ENCODE measurements at regions of chr1 and their contacts with region 1.

Region 1: DNA sequence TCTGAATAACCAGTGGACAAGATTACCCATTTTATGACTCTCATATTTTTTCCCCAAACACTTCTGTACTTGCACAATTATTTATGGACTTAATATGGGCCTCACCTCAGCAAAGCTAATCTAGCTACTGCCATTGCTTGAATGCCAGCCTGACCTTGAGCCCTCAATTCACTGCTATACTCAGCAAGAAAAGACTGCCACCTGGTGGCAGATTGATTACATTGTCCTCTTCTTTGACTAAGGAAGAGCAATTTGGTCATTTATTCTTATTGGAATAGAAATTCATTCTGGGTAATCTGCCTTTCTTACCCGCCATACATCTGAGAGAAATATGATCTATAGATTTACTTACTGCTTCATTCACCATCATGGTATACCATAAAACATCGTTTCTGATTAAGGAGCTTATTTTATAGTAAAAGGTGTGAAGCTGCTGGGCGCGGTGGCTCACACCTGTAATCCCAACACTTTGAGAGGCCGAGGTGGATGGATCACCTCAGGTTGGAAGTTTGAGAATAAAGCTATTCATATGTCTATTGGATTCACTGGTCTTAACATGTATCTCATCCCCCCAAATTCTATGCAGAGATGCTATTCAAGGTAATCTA is 32.9 kb upstream of the DIPK1A start:
- DNase-seq: peak; percentile 66
- H3K4me3 Mint-ChIP-seq: no peak overlapping the region
- H3K27ac Mint-ChIP-seq: no peak overlapping the region
- H3K4me1 Mint-ChIP-seq: peaks cover 42% of the 10 kb centered on the region
- H3K27me3 Mint-ChIP-seq: no peaks in the 10 kb centered on the region

Region 2: GRCh38 chr1:92784639-92785500 is 209.3 kb before region 1 on chr1 and contains the start of gene EVI5:
- CTCF ChIA-PET with region 1: no interaction called
- POLR2A ChIA-PET with region 1: no interaction called
- intact Hi-C with region 1: no loop called
- DNase-seq: peak; percentile 70
- H3K4me3 Mint-ChIP-seq: peak within 1 kb of the TSS; percentile 71
- H3K27ac Mint-ChIP-seq: no peak within 1 kb of the TSS
- H3K4me1 Mint-ChIP-seq: peaks cover 13% of the 10 kb centered on the region
- H3K27me3 Mint-ChIP-seq: peaks cover 44% of the 10 kb centered on the region
- total RNA-seq, gene EVI5: 36.0 to 37.2 TPM

Region 3: GRCh38 chr1:92837062-92837461 is 157.1 kb before region 1 on chr1:
- CTCF ChIA-PET with region 1: interaction called, 15 read pairs
- POLR2A ChIA-PET with region 1: interaction called, 3 read pairs
- intact Hi-C with region 1: no loop called
- DNase-seq: no peak
- H3K4me3 Mint-ChIP-seq: peak overlapping the region; percentile 38
- H3K27ac Mint-ChIP-seq: peak overlapping the region; percentile 95
- H3K4me1 Mint-ChIP-seq: peaks cover 79% of the 10 kb centered on the region
- H3K27me3 Mint-ChIP-seq: no peaks in the 10 kb centered on the region

Region 4: GRCh38 chr1:92951141-92951582 is 43.0 kb before region 1 on chr1:
- CTCF ChIA-PET with region 1: interaction called, 24 read pairs
- POLR2A ChIA-PET with region 1: no interaction called
- intact Hi-C with region 1: no loop called
- DNase-seq: peak; percentile 36
- H3K4me3 Mint-ChIP-seq: no peak overlapping the region
- H3K27ac Mint-ChIP-seq: no peak overlapping the region
- H3K4me1 Mint-ChIP-seq: peaks cover 36% of the 10 kb centered on the region
- H3K27me3 Mint-ChIP-seq: no peaks in the 10 kb centered on the region

Region 5: GRCh38 chr1:92968138-92969032 is 25.8 kb before region 1 on chr1:
- CTCF ChIA-PET with region 1: interaction called, 212 read pairs
- POLR2A ChIA-PET with region 1: interaction called, 5 read pairs
- intact Hi-C with region 1: loop called (anchors 1 kb)
- DNase-seq: no peak
- H3K4me3 Mint-ChIP-seq: no peak overlapping the region
- H3K27ac Mint-ChIP-seq: no peak overlapping the region
- H3K4me1 Mint-ChIP-seq: peaks cover 24% of the 10 kb centered on the region
- H3K27me3 Mint-ChIP-seq: no peaks in the 10 kb centered on the region

Region 6: DNA sequence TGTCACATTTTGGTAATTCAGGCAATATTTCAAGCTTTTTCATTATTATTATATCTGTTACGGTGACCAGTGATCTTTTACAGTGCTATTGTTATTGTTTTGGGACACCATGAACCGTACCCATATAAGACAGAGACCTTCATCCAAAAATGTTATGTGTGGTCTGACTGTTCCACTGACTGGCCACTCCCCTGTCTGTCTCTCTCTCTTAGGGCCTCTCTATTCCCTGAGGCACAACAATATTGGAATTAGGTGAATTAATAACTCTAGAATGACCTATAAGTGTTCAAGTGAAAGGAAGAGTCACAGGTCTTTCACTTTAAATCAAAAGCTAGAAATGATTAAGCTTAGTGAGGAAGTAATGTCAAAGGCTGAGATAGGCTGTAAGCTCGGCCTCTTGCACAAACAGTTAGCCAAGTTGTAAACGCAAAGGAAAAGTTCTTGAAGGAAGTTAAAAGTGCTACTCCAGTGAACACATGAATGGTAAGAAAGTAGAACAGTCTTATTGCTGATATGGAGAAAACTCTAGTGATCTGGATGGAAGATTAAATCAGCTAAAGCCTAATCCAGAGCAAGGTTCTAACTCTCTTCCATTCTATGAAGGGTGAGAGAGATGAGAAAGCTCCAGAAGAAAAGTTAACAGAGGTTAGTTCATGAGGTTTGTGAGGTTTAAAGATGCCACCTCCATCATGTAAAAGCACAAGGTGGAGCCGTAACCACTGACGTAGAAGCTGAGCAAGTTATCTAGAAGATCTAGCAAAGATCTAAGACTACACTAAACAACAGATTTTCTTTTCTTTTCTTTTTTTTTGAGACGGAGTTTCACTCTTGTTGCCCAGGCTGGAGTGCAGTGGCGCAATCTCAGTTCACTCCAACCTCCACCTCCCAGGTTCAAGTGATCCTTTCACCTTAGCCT is 13.2 kb before region 1 on chr1:
- CTCF ChIA-PET with region 1: interaction called, 212 read pairs
- POLR2A ChIA-PET with region 1: interaction called, 3 read pairs
- intact Hi-C with region 1: loop called (anchors 1 kb)
- DNase-seq: peak; percentile 55
- H3K4me3 Mint-ChIP-seq: peak overlapping the region; percentile 58
- H3K27ac Mint-ChIP-seq: peak overlapping the region; percentile 98
- H3K4me1 Mint-ChIP-seq: peaks cover 58% of the 10 kb centered on the region
- H3K27me3 Mint-ChIP-seq: no peaks in the 10 kb centered on the region